Caco-2 (cell line): ENCODE measurements at regions of chr17 and their contacts with region 1.

Region 1: DNA sequence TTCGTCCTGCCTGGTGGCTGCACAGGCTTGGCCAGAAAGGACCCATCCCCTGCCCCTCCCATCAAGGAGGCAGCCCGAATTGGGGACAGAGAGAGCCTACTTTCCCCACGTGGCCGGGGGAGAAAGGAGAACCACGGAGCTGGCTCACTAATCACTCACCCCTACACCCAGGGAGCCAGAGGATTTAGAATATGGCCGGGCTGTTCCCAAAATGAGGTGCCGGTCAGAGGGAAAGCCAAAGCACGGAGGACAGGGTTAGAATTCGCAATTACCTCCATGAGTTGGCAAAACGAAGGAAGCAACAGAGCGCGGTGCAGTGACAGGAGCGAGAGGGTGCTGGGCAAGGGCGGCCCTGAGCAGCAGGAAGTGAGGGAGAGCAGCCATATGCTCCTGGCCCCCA is 33.1 kb downstream of the SHISA6 start:
- DNase-seq: no peak
- H3K4me3 ChIP-seq: no peak overlapping the region
- H3K4me3 Mint-ChIP-seq: no peak overlapping the region
- H3K27ac Mint-ChIP-seq: no peak overlapping the region
- H3K4me1 ChIP-seq: no peaks in the 10 kb centered on the region
- H3K4me1 Mint-ChIP-seq: no peaks in the 10 kb centered on the region
- H3K27me3 ChIP-seq: no peaks in the 10 kb centered on the region
- H3K27me3 Mint-ChIP-seq: no peaks in the 10 kb centered on the region
- CTCF ChIP-seq: no peak

Region 2: GRCh38 chr17:11251561-11252107 is 22.5 kb before region 1 on chr17:
- CTCF ChIA-PET with region 1: no interaction called
- POLR2A ChIA-PET with region 1: no interaction called
- intact Hi-C with region 1: no loop called
- DNase-seq: no peak
- H3K4me3 ChIP-seq: no peak overlapping the region
- H3K4me3 Mint-ChIP-seq: no peak overlapping the region
- H3K27ac Mint-ChIP-seq: no peak overlapping the region
- H3K4me1 ChIP-seq: no peaks in the 10 kb centered on the region
- H3K4me1 Mint-ChIP-seq: no peaks in the 10 kb centered on the region
- H3K27me3 ChIP-seq: no peaks in the 10 kb centered on the region
- H3K27me3 Mint-ChIP-seq: no peaks in the 10 kb centered on the region
- CTCF ChIP-seq: no peak

Region 3: GRCh38 chr17:11296994-11297393 is 22.9 kb after region 1 on chr17:
- CTCF ChIA-PET with region 1: no interaction called
- POLR2A ChIA-PET with region 1: no interaction called
- intact Hi-C with region 1: no loop called
- DNase-seq: no peak
- H3K4me3 ChIP-seq: no peak overlapping the region
- H3K4me3 Mint-ChIP-seq: no peak overlapping the region
- H3K27ac Mint-ChIP-seq: no peak overlapping the region
- H3K4me1 ChIP-seq: no peaks in the 10 kb centered on the region
- H3K4me1 Mint-ChIP-seq: no peaks in the 10 kb centered on the region
- H3K27me3 ChIP-seq: no peaks in the 10 kb centered on the region
- H3K27me3 Mint-ChIP-seq: no peaks in the 10 kb centered on the region
- CTCF ChIP-seq: peak in 1 of 2 experiments; percentile 37

Region 4: DNA sequence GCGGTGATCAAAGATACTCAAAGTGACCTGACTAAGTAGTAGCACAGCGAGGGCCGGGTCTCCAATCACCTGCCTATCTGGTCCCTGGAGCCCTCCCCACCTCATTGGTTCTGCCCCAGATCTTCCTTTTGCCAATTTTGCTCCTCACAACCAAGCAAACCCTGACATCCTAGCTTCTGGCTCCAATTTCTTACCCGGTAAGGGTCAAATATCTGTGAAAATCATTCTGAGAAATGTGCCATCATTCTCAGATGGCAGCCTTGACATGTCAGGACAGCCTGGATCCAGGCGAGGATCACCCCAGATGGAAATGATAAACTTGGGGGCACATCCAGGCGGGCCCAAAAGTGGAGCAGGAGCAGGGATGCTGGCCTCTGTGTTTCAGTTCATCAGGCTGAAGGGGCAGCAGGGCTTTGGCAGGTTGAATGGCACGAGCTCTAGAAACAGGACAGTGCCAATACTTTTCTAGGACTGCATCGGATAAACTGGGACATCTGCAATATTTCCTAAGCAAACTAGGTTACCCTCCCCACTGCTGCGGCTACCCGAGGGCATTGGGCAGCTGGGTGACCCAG is 50.8 kb after region 1 on chr17:
- CTCF ChIA-PET with region 1: no interaction called
- POLR2A ChIA-PET with region 1: no interaction called
- intact Hi-C with region 1: loop called (anchors 5 kb)
- DNase-seq: no peak
- H3K4me3 ChIP-seq: no peak overlapping the region
- H3K4me3 Mint-ChIP-seq: no peak overlapping the region
- H3K27ac Mint-ChIP-seq: no peak overlapping the region
- H3K4me1 ChIP-seq: no peaks in the 10 kb centered on the region
- H3K4me1 Mint-ChIP-seq: no peaks in the 10 kb centered on the region
- H3K27me3 ChIP-seq: no peaks in the 10 kb centered on the region
- H3K27me3 Mint-ChIP-seq: no peaks in the 10 kb centered on the region
- CTCF ChIP-seq: no peak

Region 5: GRCh38 chr17:11356371-11356770 is 82.3 kb after region 1 on chr17:
- CTCF ChIA-PET with region 1: no interaction called
- POLR2A ChIA-PET with region 1: no interaction called
- intact Hi-C with region 1: no loop called
- DNase-seq: no peak
- H3K4me3 ChIP-seq: no peak overlapping the region
- H3K4me3 Mint-ChIP-seq: no peak overlapping the region
- H3K27ac Mint-ChIP-seq: no peak overlapping the region
- H3K4me1 ChIP-seq: no peaks in the 10 kb centered on the region
- H3K4me1 Mint-ChIP-seq: no peaks in the 10 kb centered on the region
- H3K27me3 ChIP-seq: no peaks in the 10 kb centered on the region
- H3K27me3 Mint-ChIP-seq: no peaks in the 10 kb centered on the region
- CTCF ChIP-seq: no peak